Right lobe of liver (tissue), 6 donors: ENCODE measurements at regions of chr11 and their contacts with region 1.

Region 1: DNA sequence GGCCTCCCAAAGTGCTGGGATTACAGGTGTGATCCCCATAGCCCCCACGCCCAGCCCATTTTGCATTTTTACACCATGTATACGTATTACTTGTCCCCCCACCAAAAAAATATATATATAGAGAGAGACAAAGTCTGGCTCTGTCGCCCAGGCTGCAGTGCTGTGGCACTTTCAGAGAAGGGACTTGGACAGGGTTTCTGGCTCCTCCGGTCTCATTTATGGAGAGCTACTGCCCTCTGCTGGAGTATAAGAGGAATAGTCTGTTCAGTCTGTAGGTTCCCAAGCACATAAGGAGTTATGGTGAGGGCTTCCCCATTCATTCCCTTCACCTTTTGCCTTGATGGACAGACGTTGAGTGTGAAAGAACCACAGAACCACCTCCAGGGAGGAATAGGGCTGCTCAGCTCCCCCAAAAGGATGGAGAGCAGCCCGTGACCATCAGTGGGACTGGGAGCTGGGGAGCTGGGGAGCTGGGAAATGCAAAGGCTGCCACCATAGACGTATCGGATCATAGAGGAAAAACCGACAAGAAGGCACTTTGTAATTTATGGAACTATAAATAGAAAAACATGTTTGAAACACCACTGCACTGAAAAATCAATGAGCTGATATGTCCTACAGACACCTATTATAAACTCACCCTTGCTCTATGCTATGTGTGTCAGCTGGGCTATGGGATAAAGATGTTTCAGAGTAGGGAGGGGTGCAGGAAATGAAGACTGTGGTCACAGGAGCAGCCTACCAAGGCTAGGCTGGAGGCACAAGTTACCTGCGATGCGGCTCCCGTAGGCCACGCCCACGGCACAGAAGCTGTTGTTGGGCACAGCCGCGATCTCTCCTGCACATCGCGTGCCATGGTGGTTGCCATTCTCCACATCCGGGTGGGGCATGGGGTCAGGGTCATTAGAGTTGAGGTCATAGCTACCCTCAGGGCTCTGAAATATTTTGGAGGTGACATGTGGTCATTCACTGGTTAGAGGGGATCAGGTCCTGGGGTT is 5.2 kb downstream of the PCSK7 start:
- DNase-seq: peak in 1 of 3 donors; percentile 55
- ATAC-seq: peak; percentile 88 to 96 (median 90)
- H3K4me3 ChIP-seq: no peak overlapping the region
- H3K27ac ChIP-seq: no peak overlapping the region
- H3K4me1 ChIP-seq: peaks cover 0 to 11% (median 6%) of the 10 kb centered on the region in 4 donors
- H3K27me3 ChIP-seq: no peaks in the 10 kb centered on the region
- CTCF ChIP-seq: peak; percentile 69 to 82 (median 77)
- POLR2A ChIP-seq: no peak

Region 2: GRCh38 chr11:116853461-116854073 is 373.1 kb before region 1 on chr11:
- intact Hi-C with region 1: loop called in 1 of 2 experiments (anchors 10 kb)
- DNase-seq: no peak
- ATAC-seq: peak; percentile 40 to 49 (median 45)
- H3K4me3 ChIP-seq: no peak overlapping the region
- H3K27ac ChIP-seq: no peak overlapping the region
- H3K4me1 ChIP-seq: peaks cover 0 to 31% (median 14%) of the 10 kb centered on the region in 4 donors
- H3K27me3 ChIP-seq: no peaks in the 10 kb centered on the region
- CTCF ChIP-seq: no peak
- POLR2A ChIP-seq: no peak

Region 3: DNA sequence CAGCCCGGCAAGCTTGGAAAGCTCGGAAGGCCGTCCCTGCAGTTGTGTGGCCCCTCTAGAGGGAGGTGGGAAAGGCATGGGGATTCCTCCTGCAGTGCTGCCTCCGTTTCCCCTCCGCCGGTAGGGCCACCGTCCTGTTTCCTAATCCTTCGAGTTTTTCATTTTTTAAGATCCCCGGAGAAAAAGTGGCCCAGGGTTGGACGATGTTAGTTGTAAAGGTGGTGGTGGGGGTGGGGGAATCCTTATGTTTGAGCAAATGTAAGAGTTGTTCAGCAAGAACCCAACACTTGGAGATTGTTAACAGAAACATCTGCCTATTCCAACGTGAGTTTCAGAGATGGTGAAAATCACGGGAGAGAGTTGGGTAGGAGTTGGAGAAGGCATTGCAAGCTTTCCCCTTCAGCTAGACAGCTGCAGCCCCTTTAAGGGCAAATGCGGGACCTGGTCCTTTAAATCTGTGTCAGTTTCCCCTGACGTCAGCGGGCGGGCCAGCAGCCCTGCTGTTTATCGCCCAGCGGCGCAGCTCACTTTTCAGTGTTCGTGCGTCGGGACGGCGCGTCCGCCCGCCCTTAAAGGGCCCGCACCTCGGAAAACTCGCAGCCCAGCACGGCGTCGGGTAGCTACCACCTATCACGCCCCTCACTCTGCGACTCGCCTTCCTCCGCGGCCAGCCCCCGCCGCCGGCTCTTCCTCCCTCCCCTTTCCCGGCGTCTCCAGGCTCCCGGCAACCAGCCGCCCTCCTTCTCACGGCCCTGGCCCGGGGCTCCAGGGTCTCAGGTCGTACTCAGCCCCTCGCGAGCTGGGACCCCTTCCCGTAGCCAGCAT is 48.3 kb before region 1 on chr11 and contains the start of gene SIDT2:
- intact Hi-C with region 1: loop called in 1 of 2 experiments (anchors 10 kb)
- DNase-seq: peak; percentile 97 to 98 (median 97)
- ATAC-seq: peak; percentile 94 to 97 (median 96)
- H3K4me3 ChIP-seq: peak within 1 kb of the TSS; percentile 92 to 100 (median 93)
- H3K27ac ChIP-seq: peak within 1 kb of the TSS; percentile 93 to 97 (median 95)
- H3K4me1 ChIP-seq: peaks cover 0 to 24% (median 5%) of the 10 kb centered on the region in 4 donors
- H3K27me3 ChIP-seq: no peaks in the 10 kb centered on the region
- CTCF ChIP-seq: no peak
- POLR2A ChIP-seq: peak; percentile 91
- total RNA-seq, gene SIDT2: 24.6 to 49.9 (median 35.5) TPM

Region 4: GRCh38 chr11:118076754-118077281 is 850.1 kb after region 1 on chr11 and contains the start of gene TMPRSS4:
- intact Hi-C with region 1: no loop called
- DNase-seq: no peak
- ATAC-seq: peak in 1 of 4 donors; percentile 9
- H3K4me3 ChIP-seq: no peak within 1 kb of the TSS
- H3K27ac ChIP-seq: no peak within 1 kb of the TSS
- H3K4me1 ChIP-seq: no peaks in the 10 kb centered on the region
- H3K27me3 ChIP-seq: no peaks in the 10 kb centered on the region
- CTCF ChIP-seq: no peak
- POLR2A ChIP-seq: no peak
- total RNA-seq, gene TMPRSS4: 0.35 to 0.51 TPM in 2 of 6 experiments, not detected in the others